ENCODE measurements at regions of chr5 and their contacts with region 1.

Region 1: DNA sequence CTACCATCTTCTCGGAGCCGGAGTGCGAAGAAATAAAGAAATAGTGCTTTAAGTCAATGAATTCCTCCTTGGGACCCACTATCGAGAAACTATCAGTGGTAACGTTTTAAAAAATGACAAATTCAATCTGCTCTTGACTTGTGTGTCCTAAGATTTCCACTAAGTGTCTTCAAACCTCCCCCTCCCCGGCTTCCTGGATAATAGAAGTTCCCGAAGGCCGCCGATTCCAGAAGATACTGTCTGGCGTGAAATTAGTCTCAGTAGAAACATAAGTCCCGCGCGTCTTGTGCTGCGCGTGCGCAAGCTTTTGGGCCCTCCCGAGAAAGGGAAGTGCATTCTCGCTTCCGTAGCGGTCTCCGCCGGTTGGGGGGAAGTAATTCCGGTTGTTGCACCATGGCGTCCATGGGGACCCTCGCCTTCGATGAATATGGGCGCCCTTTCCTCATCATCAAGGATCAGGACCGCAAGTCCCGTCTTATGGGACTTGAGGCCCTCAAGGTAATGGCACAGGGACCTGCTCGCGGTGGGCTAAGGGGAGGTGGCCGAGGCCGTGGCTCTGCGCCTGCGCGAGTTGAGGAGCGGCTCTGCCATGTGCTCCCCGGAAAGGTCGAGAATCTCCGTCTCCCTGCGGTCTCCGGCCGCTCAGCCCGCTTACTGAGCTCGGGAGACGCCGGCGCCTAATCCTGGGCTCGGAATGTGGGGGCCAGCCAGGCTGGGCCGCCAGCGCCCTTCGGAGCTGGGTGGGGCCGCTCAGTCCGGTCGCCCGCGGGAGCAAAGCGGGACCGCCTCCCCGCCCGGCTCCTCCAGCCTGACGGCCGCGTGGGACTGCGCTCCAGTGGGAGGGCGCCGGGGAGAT is at the start of gene CCT5:
- DNase-seq: peak; percentile 94 to 96 (median 95)
- H3K4me3 ChIP-seq: peak within 1 kb of the TSS; percentile 81 to 99
- H3K4me3 Mint-ChIP-seq: peak within 1 kb of the TSS; percentile 90 to 99 (median 95)
- H3K27ac ChIP-seq: peak within 1 kb of the TSS; percentile 91
- H3K27ac Mint-ChIP-seq: peak within 1 kb of the TSS; percentile 98 to 100 (median 99)
- H3K4me1 ChIP-seq: peaks cover 43% of the 10 kb centered on the region
- H3K4me1 Mint-ChIP-seq: peaks cover 24 to 64% (median 43%) of the 10 kb centered on the region in 4 donors
- H3K27me3 ChIP-seq: no peaks in the 10 kb centered on the region
- H3K27me3 Mint-ChIP-seq: peaks cover 0 to 5% of the 10 kb centered on the region in 2 donors
- total RNA-seq, gene CCT5: 92.7 to 93.3 TPM

Region 2: DNA sequence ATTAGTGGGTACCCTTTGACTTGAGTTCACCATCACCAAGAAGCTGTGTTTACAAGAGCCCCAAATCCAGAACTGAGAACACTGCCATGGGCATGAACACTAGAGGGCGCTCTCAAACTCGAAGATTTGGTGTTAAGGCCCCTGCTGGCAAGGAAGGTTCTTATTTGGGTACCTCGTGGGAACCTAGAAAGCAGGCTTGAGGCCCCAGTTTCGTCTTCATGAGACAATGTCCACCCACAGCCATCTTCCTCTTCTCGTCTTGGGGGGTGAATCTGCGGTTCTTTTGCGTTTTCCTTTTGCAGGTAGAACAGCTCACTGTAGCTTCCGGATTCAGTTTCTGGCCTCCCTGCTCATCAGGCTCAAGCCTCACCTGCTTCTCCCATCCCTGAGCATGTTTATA is 888.3 kb before region 1 on chr5:
- CTCF ChIA-PET with region 1: no interaction called
- POLR2A ChIA-PET with region 1: no interaction called
- intact Hi-C with region 1: loop called (anchors 5 kb)
- DNase-seq: peak; percentile 32 to 65 (median 34)
- H3K4me3 ChIP-seq: no peak overlapping the region
- H3K4me3 Mint-ChIP-seq: peak overlapping the region in 2 of 8 donors; percentile 22 to 44
- H3K27ac ChIP-seq: no peak overlapping the region
- H3K27ac Mint-ChIP-seq: peak overlapping the region in 3 of 7 donors; percentile 10 to 56 (median 48)
- H3K4me1 ChIP-seq: peaks cover 9% of the 10 kb centered on the region
- H3K4me1 Mint-ChIP-seq: peaks cover 8 to 30% (median 15%) of the 10 kb centered on the region in 4 donors
- H3K27me3 ChIP-seq: no peaks in the 10 kb centered on the region
- H3K27me3 Mint-ChIP-seq: no peaks in the 10 kb centered on the region

Region 3: DNA sequence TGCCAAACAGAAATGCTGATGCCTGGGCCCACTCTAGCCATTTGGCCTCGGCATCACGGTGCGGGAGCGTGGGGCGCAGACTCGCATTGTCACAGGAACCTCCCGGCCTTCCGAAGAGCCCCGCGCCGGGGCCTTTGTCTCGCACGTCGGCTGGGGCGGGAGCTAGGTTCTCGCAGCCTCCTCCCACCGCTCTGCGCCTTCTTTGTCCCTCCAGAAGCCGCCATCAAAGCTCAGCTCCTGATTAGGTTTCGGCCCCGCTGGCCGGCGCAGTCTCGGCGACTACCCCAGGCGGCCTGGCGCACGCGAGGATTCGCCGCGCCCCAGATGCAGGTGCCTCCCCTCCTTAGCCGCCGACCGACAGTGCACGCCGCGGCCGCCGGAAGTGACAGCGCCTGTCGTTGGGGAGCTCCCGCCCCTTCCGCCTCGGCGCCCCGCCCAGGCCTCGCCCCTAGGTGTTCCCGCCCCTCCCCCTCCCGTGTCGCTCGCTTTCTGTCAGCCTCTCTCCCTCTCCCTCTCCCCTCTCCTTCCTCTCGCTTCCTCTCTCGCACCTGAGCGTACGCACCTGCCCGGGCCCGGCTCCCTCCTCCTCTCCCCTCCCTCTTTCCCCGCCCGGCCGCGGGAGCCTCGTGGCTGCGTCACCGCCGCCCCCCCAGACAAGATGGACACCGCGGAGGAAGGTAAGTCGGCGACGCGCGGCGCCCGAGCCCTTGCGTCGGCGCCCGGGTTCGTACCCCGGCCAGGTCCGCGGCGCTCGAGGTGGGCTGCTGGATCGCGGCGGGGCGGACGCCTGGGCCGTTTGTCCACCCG is 103.3 kb after region 1 on chr5 and contains the start of gene MARCHF6:
- CTCF ChIA-PET with region 1: no interaction called
- POLR2A ChIA-PET with region 1: interaction called, 45 read pairs
- intact Hi-C with region 1: loop called (anchors 1 kb)
- DNase-seq: peak; percentile 94 to 97 (median 94)
- H3K4me3 ChIP-seq: peak within 1 kb of the TSS; percentile 85
- H3K4me3 Mint-ChIP-seq: peak within 1 kb of the TSS; percentile 93 to 100 (median 99)
- H3K27ac ChIP-seq: peak within 1 kb of the TSS; percentile 83
- H3K27ac Mint-ChIP-seq: peak within 1 kb of the TSS; percentile 95 to 100 (median 99)
- H3K4me1 ChIP-seq: peaks cover 49% of the 10 kb centered on the region
- H3K4me1 Mint-ChIP-seq: peaks cover 27 to 54% (median 35%) of the 10 kb centered on the region in 4 donors
- H3K27me3 ChIP-seq: no peaks in the 10 kb centered on the region
- H3K27me3 Mint-ChIP-seq: no peaks in the 10 kb centered on the region
- total RNA-seq, gene MARCHF6: 195 to 203 TPM

Region 4: DNA sequence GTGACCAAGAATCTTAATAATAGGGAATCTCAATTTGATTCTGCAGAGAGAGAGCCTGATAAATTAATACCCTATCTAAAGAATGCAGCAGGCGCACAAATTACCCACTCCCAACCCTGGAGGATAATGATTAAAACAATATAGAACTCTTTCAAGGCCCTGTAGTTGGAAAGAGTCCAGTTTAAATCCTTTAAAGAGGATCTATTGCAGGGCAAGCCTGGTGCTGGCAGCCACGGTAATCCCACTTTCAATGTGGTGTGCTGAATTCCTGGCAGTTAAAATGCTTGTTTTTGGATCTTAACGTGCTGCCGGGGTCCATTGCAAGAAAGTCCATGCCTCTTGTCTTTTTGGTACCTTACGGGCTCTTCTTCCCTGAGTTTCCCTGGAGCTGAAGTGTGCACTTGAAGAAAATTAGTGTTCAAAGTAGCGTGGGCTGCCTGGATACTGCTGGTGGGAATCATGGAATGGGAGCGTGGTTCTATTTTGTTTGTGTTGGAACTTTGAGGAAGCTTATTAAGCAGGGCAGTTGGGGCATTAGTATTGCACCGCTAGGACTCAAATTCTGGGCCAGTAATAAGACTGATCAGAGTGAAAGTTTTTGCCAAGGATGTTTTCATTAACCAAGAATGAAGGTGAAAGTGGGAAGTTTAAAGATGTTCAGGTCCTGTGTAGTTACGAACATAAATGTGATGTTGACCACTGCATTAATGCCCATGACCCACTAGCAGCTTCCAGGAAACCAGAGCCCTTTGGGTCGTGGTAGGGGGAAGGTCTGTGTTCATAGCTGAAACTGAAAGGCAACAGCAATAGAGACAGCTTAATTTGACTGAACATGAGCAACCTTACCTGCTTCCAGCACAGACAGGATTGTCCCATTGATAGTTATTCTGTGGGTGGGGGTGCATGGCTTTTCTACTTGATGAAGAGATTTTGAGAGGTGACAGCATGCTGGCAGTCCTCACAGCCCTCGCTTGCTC is 124.2 kb after region 1 on chr5:
- CTCF ChIA-PET with region 1: no interaction called
- POLR2A ChIA-PET with region 1: no interaction called
- intact Hi-C with region 1: no loop called
- DNase-seq: no peak
- H3K4me3 ChIP-seq: no peak overlapping the region
- H3K4me3 Mint-ChIP-seq: peak overlapping the region in 2 of 8 donors; percentile 36 to 47
- H3K27ac ChIP-seq: no peak overlapping the region
- H3K27ac Mint-ChIP-seq: peak overlapping the region in 5 of 7 donors; percentile 16 to 56 (median 41)
- H3K4me1 ChIP-seq: peaks cover 59% of the 10 kb centered on the region
- H3K4me1 Mint-ChIP-seq: peaks cover 54 to 85% (median 68%) of the 10 kb centered on the region in 4 donors
- H3K27me3 ChIP-seq: no peaks in the 10 kb centered on the region
- H3K27me3 Mint-ChIP-seq: no peaks in the 10 kb centered on the region

Region 5: DNA sequence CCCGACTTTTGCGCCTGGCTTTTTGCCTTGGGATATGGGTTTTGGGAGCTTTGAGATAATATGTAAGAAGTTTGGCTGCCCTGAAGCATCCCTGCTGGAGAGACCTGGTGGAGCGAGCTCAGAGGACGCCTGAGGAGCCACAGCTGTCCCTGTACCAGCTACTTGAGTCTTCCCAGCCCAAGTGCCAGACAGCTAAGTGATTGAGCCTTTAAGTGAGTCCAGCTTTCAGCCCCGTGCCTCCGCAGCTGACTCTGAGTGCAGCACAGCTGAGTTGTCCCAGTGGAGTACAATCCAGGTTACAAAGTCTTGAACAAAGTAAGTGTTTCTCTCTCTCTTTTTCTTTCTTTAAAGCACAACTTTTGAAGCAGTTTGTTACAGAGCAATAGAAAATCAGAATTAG is 714.6 kb after region 1 on chr5:
- CTCF ChIA-PET with region 1: no interaction called
- POLR2A ChIA-PET with region 1: interaction called, 4 read pairs
- intact Hi-C with region 1: loop called (anchors 1 kb)
- DNase-seq: no peak
- H3K4me3 ChIP-seq: no peak overlapping the region
- H3K4me3 Mint-ChIP-seq: no peak overlapping the region
- H3K27ac ChIP-seq: no peak overlapping the region
- H3K27ac Mint-ChIP-seq: no peak overlapping the region
- H3K4me1 ChIP-seq: peaks cover 10% of the 10 kb centered on the region
- H3K4me1 Mint-ChIP-seq: peaks cover 7 to 19% (median 13%) of the 10 kb centered on the region in 4 donors
- H3K27me3 ChIP-seq: no peaks in the 10 kb centered on the region
- H3K27me3 Mint-ChIP-seq: peaks cover 0 to 1% of the 10 kb centered on the region in 2 donors

Measured in CD4-positive, alpha-beta memory T cell (primary cell).